OCI-LY7 (cell line): ENCODE measurements at regions of chr3 and their contacts with region 1.

Region 1: DNA sequence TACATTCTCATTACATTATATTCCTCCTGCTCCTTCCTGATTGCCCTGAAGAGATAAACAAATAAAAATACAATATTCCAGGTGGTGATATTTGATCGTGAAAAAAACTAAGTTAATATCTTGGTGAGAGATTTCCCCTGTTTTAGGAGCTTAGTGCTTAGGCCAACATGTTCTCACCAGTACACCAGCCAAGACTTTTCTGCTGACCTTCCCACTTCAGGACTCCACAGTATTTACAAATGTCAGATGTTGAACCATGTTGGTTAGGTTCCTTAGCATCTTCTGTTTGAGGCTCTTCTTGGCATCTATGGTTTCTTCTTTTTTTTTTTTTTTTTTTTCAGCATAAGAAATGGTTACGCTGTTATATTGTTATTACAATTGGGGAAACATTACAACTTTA is 247.0 kb downstream of the IL5RA start:
- DNase-seq: no peak
- H3K4me3 ChIP-seq: no peak overlapping the region
- H3K27ac ChIP-seq: no peak overlapping the region
- H3K4me1 ChIP-seq: no peaks in the 10 kb centered on the region
- CTCF ChIP-seq: no peak

Region 2: GRCh38 chr3:2303566-2303965 is 559.6 kb before region 1 on chr3:
- CTCF ChIA-PET with region 1: no interaction called
- POLR2A ChIA-PET with region 1: interaction called, 14 read pairs
- intact Hi-C with region 1: no loop called
- DNase-seq: no peak
- H3K4me3 ChIP-seq: no peak overlapping the region
- H3K27ac ChIP-seq: no peak overlapping the region
- H3K4me1 ChIP-seq: no peaks in the 10 kb centered on the region
- CTCF ChIP-seq: no peak